ENCODE measurements at regions of chr6 and their contacts with region 1.

Region 1: DNA sequence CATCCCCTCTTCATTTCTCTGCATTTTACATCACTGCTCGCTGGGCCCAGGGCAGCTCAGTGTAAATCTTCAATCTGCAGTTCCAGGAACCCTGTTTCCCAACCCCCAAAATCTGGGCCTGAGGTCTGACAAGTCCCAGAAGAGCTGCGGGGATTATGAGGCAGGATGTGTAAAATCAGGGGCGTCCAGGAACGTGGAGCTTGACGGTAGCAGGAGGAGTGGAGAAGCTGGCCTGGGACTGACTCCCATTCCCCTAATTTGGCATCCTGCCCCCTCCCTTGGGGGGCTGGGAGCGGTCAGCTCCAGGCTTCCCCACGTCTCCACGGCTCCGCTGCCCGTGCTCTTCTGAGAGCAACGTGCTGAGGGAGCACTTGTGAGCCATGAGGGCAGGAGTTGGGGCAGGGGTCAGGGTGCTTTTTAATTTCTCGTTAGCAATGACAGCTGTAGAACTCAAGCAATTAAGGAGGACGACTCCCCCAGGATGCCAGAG is 23.4 kb upstream of the VEGFA start:
- DNase-seq: peak; percentile 17
- H3K4me3 ChIP-seq: no peak overlapping the region
- H3K27ac ChIP-seq: no peak overlapping the region
- H3K4me1 ChIP-seq: no peaks in the 10 kb centered on the region; a peak in 1 of 4 replicates
- H3K27me3 ChIP-seq: 0 out of 2 replicates have a peak, but pooled peaks cover 4% of the 10 kb centered on the region
- CTCF ChIP-seq: no peak
- EP300 ChIP-seq: no peak
- RAD21 ChIP-seq: no peak

Region 2: GRCh38 chr6:43758617-43759050 is 12.0 kb after region 1 on chr6:
- CTCF ChIA-PET with region 1: interaction called, 10 read pairs
- POLR2A ChIA-PET with region 1: no interaction called
- DNase-seq: peak; percentile 67
- H3K4me3 ChIP-seq: no peak overlapping the region; a peak in 1 of 4 replicates
- H3K27ac ChIP-seq: no peak overlapping the region
- H3K4me1 ChIP-seq: peaks cover 0 to 12% of the 10 kb centered on the region in 2 experiments; a peak in 1 of 4 replicates
- H3K27me3 ChIP-seq: peaks cover 11% of the 10 kb centered on the region; the same call in 1 of the 2 replicates
- CTCF ChIP-seq: peak; percentile 60
- EP300 ChIP-seq: no peak
- RAD21 ChIP-seq: peak; percentile 50

Region 3: GRCh38 chr6:43874267-43874666 is 127.6 kb after region 1 on chr6:
- CTCF ChIA-PET with region 1: no interaction called
- POLR2A ChIA-PET with region 1: no interaction called
- DNase-seq: no peak
- H3K4me3 ChIP-seq: no peak overlapping the region
- H3K27ac ChIP-seq: no peak overlapping the region
- H3K4me1 ChIP-seq: peaks cover 0 to 52% of the 10 kb centered on the region in 2 experiments; a peak in 2 of 4 replicates
- H3K27me3 ChIP-seq: no peaks in the 10 kb centered on the region
- CTCF ChIP-seq: no peak
- EP300 ChIP-seq: no peak
- RAD21 ChIP-seq: no peak

Region 4: GRCh38 chr6:43924222-43924702 is 177.6 kb after region 1 on chr6:
- CTCF ChIA-PET with region 1: no interaction called
- POLR2A ChIA-PET with region 1: no interaction called
- DNase-seq: peak; percentile 47
- H3K4me3 ChIP-seq: no peak overlapping the region
- H3K27ac ChIP-seq: peak overlapping the region; percentile 17 to 68; a peak in 2 of 4 replicates
- H3K4me1 ChIP-seq: peaks cover 40 to 62% of the 10 kb centered on the region in 2 experiments
- H3K27me3 ChIP-seq: no peaks in the 10 kb centered on the region
- CTCF ChIP-seq: no peak
- EP300 ChIP-seq: no peak
- RAD21 ChIP-seq: no peak